Aorta (tissue), 5 donors: ENCODE measurements at regions of chr10 and their contacts with region 1.

Region 1: DNA sequence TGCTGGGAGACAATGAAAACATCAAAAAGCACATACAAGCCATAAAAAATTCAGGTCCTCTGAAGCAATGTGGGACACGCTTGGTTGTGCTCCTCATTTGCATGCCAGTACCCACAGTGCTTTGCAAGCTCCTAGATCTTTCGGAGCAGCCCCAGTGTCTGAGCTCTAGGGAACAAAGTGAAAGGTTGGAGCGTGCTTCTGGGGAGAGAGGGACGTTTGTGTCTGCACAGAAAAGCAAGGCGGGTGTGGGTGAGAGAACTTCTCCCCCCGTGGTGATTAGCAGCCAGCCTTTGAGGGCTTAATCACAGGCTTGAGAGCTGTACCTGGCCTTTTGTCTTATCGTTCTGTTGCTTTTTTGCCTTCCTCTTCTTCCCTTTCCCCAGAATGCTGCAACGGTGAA is 76.7 kb upstream of the HABP2 start:
- DNase-seq: no peak
- ATAC-seq: peak; percentile 58
- H3K4me3 ChIP-seq: no peak overlapping the region
- H3K27ac ChIP-seq: peak overlapping the region; percentile 83 to 99
- H3K4me1 ChIP-seq: peaks cover 9 to 22% of the 10 kb centered on the region in 2 donors
- H3K27me3 ChIP-seq: no peaks in the 10 kb centered on the region

Region 2: GRCh38 chr10:112585126-112585525 is 891.1 kb before region 1 on chr10:
- intact Hi-C with region 1: loop called in 1 of 2 experiments (anchors 5 kb)
- DNase-seq: peak in 1 of 2 donors; percentile 70
- ATAC-seq: peak; percentile 70
- H3K4me3 ChIP-seq: no peak overlapping the region
- H3K27ac ChIP-seq: no peak overlapping the region
- H3K4me1 ChIP-seq: peaks cover 2 to 6% of the 10 kb centered on the region in 2 donors
- H3K27me3 ChIP-seq: no peaks in the 10 kb centered on the region

Region 3: GRCh38 chr10:113491967-113492580 is 15.9 kb after region 1 on chr10:
- intact Hi-C with region 1: loop called in 1 of 2 experiments (anchors 2 kb)
- DNase-seq: no peak
- ATAC-seq: peak; percentile 80
- H3K4me3 ChIP-seq: peak overlapping the region in 1 of 2 donors; percentile 72
- H3K27ac ChIP-seq: peak overlapping the region; percentile 60 to 97
- H3K4me1 ChIP-seq: peaks cover 5 to 27% of the 10 kb centered on the region in 2 donors
- H3K27me3 ChIP-seq: no peaks in the 10 kb centered on the region